ENCODE measurements at regions of chr6 and their contacts with region 1.

Region 1: GRCh38 chr6:96972689-96973088 is 48.2 kb downstream of the KLHL32 start:
- DNase-seq: no peak
- H3K4me3 ChIP-seq: no peak overlapping the region
- H3K27ac ChIP-seq: no peak overlapping the region
- H3K4me1 ChIP-seq: no peaks in the 10 kb centered on the region
- H3K27me3 ChIP-seq: no peaks in the 10 kb centered on the region
- CTCF ChIP-seq: no peak
- POLR2A ChIP-seq: no peak

Region 2: GRCh38 chr6:96391776-96392360 is 580.8 kb before region 1 on chr6:
- intact Hi-C with region 1: loop called (anchors 5 kb)
- DNase-seq: no peak
- H3K4me3 ChIP-seq: no peak overlapping the region
- H3K27ac ChIP-seq: no peak overlapping the region
- H3K4me1 ChIP-seq: no peaks in the 10 kb centered on the region
- H3K27me3 ChIP-seq: no peaks in the 10 kb centered on the region
- CTCF ChIP-seq: no peak
- POLR2A ChIP-seq: no peak

Region 3: DNA sequence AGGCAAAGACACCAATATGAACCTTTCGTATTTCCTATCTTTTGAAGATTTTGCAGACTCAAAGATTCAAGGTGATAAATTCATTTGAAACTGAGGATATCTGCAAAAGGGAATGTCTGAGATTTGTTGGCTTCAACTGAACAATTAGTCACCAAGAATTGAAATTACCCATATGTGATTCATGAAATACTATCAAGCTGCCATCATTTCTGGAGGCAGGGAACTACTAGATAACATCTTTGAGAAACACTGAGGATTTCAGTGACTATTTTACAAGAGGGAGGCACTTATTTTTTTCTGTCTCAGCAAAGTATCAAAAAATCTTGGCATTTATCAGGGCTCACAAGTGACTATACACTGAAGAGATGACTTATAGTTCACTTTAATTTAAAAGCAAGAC is 350.1 kb after region 1 on chr6:
- intact Hi-C with region 1: no loop called
- DNase-seq: no peak
- H3K4me3 ChIP-seq: no peak overlapping the region
- H3K27ac ChIP-seq: no peak overlapping the region
- H3K4me1 ChIP-seq: no peaks in the 10 kb centered on the region
- H3K27me3 ChIP-seq: no peaks in the 10 kb centered on the region
- CTCF ChIP-seq: no peak
- POLR2A ChIP-seq: no peak

Measured in vagina (tissue), 2 donors.